ENCODE measurements at regions of chr10 and their contacts with region 1.

Region 1: GRCh38 chr10:92087750-92088395 is 164.3 kb downstream of the BTAF1 start:
- DNase-seq: peak in 4 of 6 donors; percentile 24 to 76 (median 54)
- ATAC-seq: peak; percentile 98 to 99 (median 98)
- H3K4me3 ChIP-seq: no peak overlapping the region
- H3K27ac ChIP-seq: peak overlapping the region in 1 of 4 donors; percentile 1
- H3K4me1 ChIP-seq: peaks cover under 1 to 13% (median 9%) of the 10 kb centered on the region in 3 donors
- H3K27me3 ChIP-seq: no peaks in the 10 kb centered on the region
- CTCF ChIP-seq: peak; percentile 31 to 68 (median 66)

Region 2: GRCh38 chr10:92290837-92291615 is 203.2 kb after region 1 on chr10 and contains the starts of genes CPEB3 and MARCHF5:
- intact Hi-C with region 1: loop called in 1 of 3 experiments (anchors 10 kb)
- DNase-seq: peak; percentile 97 to 99 (median 97)
- ATAC-seq: peak; percentile 95 to 99 (median 96)
- H3K4me3 ChIP-seq: peak within 1 kb of the TSS; percentile 57 to 97 (median 95)
- H3K27ac ChIP-seq: peak within 1 kb of the TSS; percentile 71 to 99 (median 92)
- H3K4me1 ChIP-seq: peaks cover 0 to 8% (median 5%) of the 10 kb centered on the region in 3 donors
- H3K27me3 ChIP-seq: no peaks in the 10 kb centered on the region
- CTCF ChIP-seq: peak; percentile 59 to 70 (median 66)
- total RNA-seq, gene CPEB3: 4.3 to 7.0 (median 4.6) TPM
- total RNA-seq, gene MARCHF5: 12.8 to 26.5 (median 14.1) TPM

Region 3: DNA sequence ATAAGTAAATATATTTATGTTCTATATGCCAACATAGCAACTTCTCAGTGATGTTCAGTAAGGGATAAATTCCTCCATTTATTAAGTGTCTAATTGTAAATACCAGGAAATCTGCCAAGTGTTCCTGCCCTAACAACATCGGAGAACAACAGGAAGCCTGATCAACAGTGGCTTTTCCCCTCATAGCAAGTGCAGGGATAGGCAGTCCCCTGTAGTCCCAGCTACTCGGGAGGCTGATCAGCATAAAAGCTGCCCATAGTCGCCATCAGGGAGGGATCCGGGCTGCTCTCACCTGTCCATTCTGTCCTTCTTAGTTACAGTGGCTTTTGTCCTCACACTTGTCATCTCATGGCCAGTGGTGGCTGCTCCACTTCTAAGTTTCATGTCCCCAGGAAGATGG is 344.7 kb after region 1 on chr10:
- intact Hi-C with region 1: loop called in 1 of 3 experiments (anchors 10 kb)
- DNase-seq: no peak
- ATAC-seq: no peak
- H3K4me3 ChIP-seq: no peak overlapping the region
- H3K27ac ChIP-seq: no peak overlapping the region
- H3K4me1 ChIP-seq: no peaks in the 10 kb centered on the region
- H3K27me3 ChIP-seq: no peaks in the 10 kb centered on the region
- CTCF ChIP-seq: no peak